Activated CD4-positive, alpha-beta memory T cell treated with anti-CD3 and anti-CD28 coated beads for 36 hours (primary cell): ENCODE measurements at regions of chr3 and their contacts with region 1.

Region 1: GRCh38 chr3:48556793-48557626 is at the start of gene PFKFB4:
- DNase-seq: peak; percentile 100
- H3K4me3 Mint-ChIP-seq: peak within 1 kb of the TSS; percentile 83
- H3K27ac Mint-ChIP-seq: peak within 1 kb of the TSS; percentile 59
- H3K4me1 Mint-ChIP-seq: peaks cover 16% of the 10 kb centered on the region
- H3K27me3 Mint-ChIP-seq: no peaks in the 10 kb centered on the region
- total RNA-seq, gene PFKFB4: 19.4 to 22.4 TPM

Region 2: DNA sequence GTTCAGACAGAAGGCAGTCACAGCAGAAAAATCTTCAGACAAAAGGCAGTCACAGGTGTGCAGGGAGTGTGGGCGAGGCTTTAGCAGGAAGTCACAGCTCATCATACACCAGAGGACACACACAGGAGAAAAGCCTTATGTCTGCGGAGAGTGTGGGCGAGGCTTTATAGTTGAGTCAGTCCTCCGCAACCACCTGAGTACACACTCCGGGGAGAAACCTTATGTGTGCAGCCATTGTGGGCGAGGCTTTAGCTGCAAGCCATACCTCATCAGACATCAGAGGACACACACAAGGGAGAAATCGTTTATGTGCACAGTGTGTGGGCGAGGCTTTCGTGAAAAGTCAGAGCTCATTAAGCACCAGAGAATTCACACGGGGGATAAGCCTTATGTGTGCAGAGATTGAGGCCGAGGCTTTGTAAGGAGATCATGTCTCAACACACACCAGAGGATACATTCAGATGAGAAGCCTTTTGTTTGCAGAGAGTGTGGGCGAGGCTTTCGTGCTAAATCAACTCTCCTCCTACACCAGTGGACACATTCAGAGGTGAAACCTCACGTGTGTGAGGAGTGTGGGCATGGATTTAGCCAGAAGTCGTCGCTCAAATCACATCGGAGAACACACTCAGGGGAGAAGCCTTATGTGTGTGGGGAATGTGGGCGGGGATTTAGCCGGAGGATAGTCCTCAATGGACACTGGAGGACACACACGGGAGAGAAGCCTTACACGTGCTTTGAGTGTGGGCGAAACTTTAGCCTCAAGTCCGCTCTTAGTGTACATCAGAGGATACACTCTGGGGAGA is 288.4 kb before region 1 on chr3:
- CTCF ChIA-PET with region 1: interaction called, 4 read pairs
- POLR2A ChIA-PET with region 1: no interaction called
- intact Hi-C with region 1: loop called (anchors 1 kb)
- DNase-seq: peak; percentile 95
- H3K4me3 Mint-ChIP-seq: peak overlapping the region; percentile 33
- H3K27ac Mint-ChIP-seq: peak overlapping the region; percentile 89
- H3K4me1 Mint-ChIP-seq: peaks cover 37% of the 10 kb centered on the region
- H3K27me3 Mint-ChIP-seq: no peaks in the 10 kb centered on the region

Region 3: DNA sequence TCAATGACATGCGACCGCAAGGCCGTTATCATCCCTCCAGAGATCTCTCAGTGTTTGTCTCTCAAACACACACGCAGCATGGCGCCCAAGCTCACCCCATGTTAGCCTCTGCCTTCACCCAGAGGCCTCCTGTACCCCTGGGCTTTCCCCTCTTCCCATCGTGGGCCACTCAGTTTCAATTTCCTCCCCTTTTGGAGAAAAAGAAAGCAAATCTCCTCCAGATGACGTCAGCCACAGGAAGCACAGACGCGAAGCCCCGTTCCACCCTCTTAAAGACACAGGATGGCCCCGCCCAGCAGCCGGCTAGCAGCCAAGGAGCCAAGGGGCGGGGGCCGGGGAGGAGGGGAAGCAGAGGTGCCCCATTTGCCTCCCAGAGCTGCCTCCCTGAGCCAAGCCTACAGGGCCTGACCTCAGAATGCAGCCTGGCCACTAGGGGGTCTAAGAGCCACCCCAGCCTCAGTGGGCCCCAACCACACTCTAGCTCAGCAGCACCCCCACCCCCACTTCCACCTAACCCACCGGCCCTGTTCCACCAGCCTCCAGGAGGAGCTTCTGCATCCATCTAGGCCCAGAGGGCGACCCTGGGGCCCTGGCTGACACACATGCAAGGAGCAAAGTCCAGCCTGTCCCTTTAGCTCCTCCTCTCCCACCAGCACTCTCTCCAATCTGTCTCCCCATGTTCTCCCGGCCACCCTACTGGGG is 83.9 kb before region 1 on chr3:
- CTCF ChIA-PET with region 1: interaction called, 26 read pairs
- POLR2A ChIA-PET with region 1: interaction called, 7 read pairs
- intact Hi-C with region 1: loop called (anchors 1 kb)
- DNase-seq: peak; percentile 98
- H3K4me3 Mint-ChIP-seq: peak overlapping the region; percentile 79
- H3K27ac Mint-ChIP-seq: peak overlapping the region; percentile 98
- H3K4me1 Mint-ChIP-seq: peaks cover 50% of the 10 kb centered on the region
- H3K27me3 Mint-ChIP-seq: no peaks in the 10 kb centered on the region

Region 4: DNA sequence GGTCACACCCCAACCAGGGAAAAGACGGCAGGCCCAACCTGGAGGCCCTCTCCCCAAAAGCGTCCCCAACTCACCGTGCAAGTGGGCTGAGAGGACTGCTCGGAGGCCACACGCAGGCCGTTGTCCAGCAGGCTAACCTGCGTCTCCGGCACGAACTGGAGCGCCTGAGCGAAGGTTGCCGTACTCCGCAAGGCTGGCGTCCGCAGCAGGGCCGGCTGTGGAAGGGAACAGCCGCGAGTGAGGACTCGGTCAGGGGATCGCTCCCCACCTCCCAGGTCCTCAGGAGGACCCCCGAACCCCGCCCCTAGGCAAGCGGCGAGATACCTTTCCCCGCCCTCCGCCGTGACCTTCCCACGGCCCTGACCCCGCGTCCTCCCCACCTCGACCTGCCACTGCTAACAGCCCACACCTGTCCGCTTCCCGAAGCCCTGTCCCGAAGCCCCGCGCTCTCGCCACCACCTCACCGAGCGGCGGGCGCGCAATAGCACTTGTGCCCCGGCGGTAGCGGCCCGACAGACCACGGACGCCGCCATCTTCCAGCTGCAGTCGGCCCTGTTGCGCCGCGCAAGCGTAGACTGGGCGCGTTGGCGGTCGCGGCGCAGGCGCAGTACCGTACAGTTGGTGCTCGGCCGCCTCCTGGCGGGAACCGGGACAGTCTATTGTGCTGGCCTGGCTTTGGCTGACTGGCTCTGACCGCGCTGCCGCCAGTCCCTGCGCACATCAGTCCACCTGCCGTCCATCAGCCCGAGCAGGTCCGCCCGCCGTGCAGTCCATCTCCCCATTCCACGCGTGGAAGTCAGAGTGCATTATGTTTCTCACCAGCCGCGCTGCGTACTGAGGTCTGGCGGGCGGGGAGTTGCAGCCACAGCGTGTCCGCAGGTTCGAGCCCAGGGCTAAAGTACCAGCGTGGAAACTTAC is 52.3 kb after region 1 on chr3 and contains the start of gene UQCRC1:
- CTCF ChIA-PET with region 1: interaction called, 9 read pairs
- POLR2A ChIA-PET with region 1: interaction called, 4 read pairs
- intact Hi-C with region 1: loop called (anchors 1 kb)
- DNase-seq: peak; percentile 95
- H3K4me3 Mint-ChIP-seq: peak within 1 kb of the TSS; percentile 99
- H3K27ac Mint-ChIP-seq: peak within 1 kb of the TSS; percentile 90
- H3K4me1 Mint-ChIP-seq: peaks cover 27% of the 10 kb centered on the region
- H3K27me3 Mint-ChIP-seq: no peaks in the 10 kb centered on the region
- total RNA-seq, gene UQCRC1: 251 to 259 TPM

Region 5: GRCh38 chr3:48656061-48656840 is 99.2 kb after region 1 on chr3:
- CTCF ChIA-PET with region 1: no interaction called
- POLR2A ChIA-PET with region 1: no interaction called
- intact Hi-C with region 1: loop called (anchors 5 kb)
- DNase-seq: peak; percentile 93
- H3K4me3 Mint-ChIP-seq: peak overlapping the region; percentile 79
- H3K27ac Mint-ChIP-seq: peak overlapping the region; percentile 84
- H3K4me1 Mint-ChIP-seq: peaks cover 5% of the 10 kb centered on the region
- H3K27me3 Mint-ChIP-seq: peaks cover 2% of the 10 kb centered on the region

Region 6: DNA sequence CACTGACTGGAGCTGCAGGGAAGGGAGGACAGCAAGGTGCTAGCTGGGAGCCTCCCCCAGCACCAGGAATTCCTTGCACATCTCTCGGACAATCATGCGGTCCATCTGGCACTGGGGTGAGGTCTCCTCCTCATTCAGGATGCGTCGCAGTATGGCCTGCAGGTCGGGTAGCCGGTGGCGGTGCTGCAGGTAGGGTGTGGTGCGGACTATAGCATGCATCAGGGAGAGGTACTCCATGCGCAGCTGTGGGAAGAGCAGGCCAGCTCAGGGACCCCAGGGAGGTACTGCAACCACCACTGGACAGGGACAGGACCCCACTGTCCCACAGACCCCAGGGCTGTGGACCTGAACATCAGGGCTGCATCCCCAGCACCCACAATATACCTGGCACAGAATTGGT is 117.5 kb after region 1 on chr3:
- CTCF ChIA-PET with region 1: no interaction called
- POLR2A ChIA-PET with region 1: no interaction called
- intact Hi-C with region 1: no loop called
- DNase-seq: no peak
- H3K4me3 Mint-ChIP-seq: no peak overlapping the region
- H3K27ac Mint-ChIP-seq: no peak overlapping the region
- H3K4me1 Mint-ChIP-seq: no peaks in the 10 kb centered on the region
- H3K27me3 Mint-ChIP-seq: no peaks in the 10 kb centered on the region

Region 7: DNA sequence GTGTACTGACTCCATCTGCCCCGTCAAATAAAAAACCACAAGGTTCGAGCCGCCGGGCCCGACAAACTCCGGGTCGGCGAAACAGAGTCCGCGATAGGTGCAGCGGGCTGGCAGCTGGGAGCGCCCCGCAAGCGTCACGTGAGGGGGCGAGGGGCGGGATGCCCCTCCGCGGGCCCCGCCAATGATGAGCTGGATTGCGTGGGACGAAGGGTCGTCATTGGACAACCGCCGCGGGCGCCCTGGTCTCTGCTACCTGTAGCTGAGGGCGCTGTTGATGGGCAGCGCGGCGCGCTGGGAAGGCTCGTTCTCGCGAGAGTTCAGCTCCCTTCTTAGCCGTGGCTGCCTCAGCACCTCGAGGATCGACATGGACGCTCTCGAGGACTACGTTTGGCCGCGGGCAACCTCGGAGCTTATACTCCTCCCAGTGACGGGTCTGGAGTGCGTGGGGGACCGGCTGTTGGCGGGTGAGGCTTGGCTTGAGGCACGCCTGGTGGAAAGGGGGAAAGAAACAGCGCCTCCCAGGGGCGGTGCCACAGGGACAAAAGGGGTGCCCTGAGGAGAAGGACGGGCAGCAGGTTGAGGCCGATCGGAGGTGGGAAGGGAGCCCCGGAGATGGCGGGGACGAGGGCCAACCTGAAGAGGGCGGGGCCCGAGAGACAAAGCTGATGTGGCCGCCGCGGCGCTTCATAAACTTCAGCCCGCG is 450.2 kb after region 1 on chr3 and contains the start of gene WDR6:
- CTCF ChIA-PET with region 1: no interaction called
- POLR2A ChIA-PET with region 1: no interaction called
- intact Hi-C with region 1: loop called (anchors 2 kb)
- DNase-seq: peak; percentile 99
- H3K4me3 Mint-ChIP-seq: peak within 1 kb of the TSS; percentile 95
- H3K27ac Mint-ChIP-seq: peak within 1 kb of the TSS; percentile 98
- H3K4me1 Mint-ChIP-seq: peaks cover 21% of the 10 kb centered on the region
- H3K27me3 Mint-ChIP-seq: no peaks in the 10 kb centered on the region
- total RNA-seq, gene WDR6: 139 to 144 TPM